Posterior cingulate gyrus (tissue), 11 donors: ENCODE measurements at regions of chr6 and their contacts with region 1.

Region 1: DNA sequence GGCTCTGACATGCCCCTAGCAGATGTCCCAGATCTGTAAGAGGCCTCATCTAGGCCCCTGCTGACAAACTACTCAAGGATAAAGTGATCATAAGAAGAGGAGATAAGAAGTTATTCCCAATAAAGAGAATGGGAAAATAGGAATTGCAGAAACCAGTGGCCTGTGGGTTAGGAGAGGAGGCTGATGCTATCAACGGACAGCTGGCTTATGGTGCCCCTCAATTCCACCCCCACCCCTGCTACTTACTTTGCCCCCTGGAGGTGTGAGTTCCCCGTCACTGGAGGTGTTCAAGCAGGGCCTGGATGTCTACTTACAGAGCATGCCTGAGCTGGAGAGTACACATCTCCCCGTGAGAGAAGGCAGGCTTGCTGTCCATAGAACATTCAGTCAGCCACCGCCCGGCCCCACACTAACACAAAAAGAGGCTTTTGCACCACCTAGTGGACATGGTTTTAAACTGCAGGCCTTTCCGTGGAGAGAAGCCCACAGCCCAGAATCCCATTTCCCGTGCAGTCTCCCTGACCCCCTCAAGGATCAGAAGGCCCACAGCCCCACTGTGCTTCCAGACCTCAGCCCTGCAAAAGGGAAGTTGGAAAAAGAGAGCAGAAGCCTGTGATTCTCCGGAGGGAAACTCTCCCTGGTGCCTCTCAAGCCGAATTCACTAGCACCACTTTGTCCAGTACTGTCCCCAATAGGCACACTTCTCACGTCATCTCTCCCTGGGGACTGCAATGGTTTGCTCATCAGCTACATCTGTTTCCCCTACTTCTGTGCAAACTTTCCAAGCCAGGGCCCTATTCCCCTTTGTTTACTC is 23.8 kb upstream of the BNIP5 start:
- DNase-seq: peak; percentile 66 to 97 (median 82)

Region 2: GRCh38 chr6:36123257-36124139 is 236.9 kb before region 1 on chr6:
- intact Hi-C with region 1: loop called (anchors 10 kb)
- DNase-seq: peak; percentile 66 to 95 (median 76)

Region 3: DNA sequence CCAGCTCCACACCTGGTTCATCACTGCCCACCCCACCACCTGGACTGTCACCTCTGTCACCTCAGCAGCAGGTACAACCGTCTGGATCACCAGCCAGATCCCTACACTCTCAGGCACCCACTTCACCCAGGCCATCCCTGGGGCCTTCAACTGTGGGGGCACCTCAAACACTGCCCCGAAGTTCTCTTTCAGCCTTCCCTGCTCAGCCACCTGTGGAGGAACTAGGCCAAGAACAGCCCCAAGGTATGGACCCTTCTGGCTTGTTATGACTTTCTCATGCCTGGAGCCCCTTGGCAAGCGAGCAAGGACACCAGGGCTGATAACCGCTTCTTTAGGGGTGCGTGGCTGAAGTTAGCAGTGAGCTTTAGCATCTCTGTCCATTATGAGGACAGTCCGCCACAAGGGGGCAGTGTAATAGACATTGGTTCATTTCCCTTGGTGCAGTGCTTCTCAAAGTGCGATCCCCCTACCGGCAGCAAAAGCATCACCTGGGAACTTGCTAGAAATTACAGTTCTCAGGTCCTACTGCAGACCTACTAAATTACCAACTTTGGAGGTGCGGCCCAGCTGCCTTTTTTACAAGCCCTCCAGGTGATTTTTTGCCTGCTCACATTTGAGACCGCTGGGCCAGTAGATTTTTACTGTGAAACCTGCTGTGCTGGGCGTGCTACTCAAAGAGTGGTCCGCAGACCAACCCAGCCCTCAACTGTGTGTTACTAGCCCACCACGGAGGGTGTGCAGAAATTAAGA is 58.0 kb before region 1 on chr6:
- intact Hi-C with region 1: loop called (anchors 1 kb)
- DNase-seq: peak in 9 of 10 donors; percentile 52 to 95 (median 82)

Region 4: GRCh38 chr6:36340618-36341454 is 19.6 kb before region 1 on chr6:
- intact Hi-C with region 1: loop called (anchors 1 kb)
- DNase-seq: peak; percentile 37 to 96 (median 78)